Activated CD8-positive, alpha-beta T cell treated with anti-CD3 and anti-CD28 coated beads, Interleukin-2, amount 10 ng/mL, durations not matched to agents 7 days and 5 days (primary cell): ENCODE measurements at regions of chr2 and their contacts with region 1.

Region 1: GRCh38 chr2:62475172-62476011 is 30.6 kb downstream of the TMEM17 start:
- DNase-seq: no peak
- ATAC-seq: peak; percentile 39
- H3K4me3 Mint-ChIP-seq: no peak overlapping the region
- H3K27ac Mint-ChIP-seq: no peak overlapping the region
- H3K4me1 Mint-ChIP-seq: peaks cover 8% of the 10 kb centered on the region
- H3K27me3 Mint-ChIP-seq: peaks cover 9% of the 10 kb centered on the region

Region 2: GRCh38 chr2:62277688-62278087 is 197.7 kb before region 1 on chr2:
- CTCF ChIA-PET with region 1: no interaction called
- POLR2A ChIA-PET with region 1: no interaction called
- DNase-seq: no peak
- ATAC-seq: no peak
- H3K4me3 Mint-ChIP-seq: no peak overlapping the region
- H3K27ac Mint-ChIP-seq: no peak overlapping the region
- H3K4me1 Mint-ChIP-seq: no peaks in the 10 kb centered on the region
- H3K27me3 Mint-ChIP-seq: no peaks in the 10 kb centered on the region

Region 3: DNA sequence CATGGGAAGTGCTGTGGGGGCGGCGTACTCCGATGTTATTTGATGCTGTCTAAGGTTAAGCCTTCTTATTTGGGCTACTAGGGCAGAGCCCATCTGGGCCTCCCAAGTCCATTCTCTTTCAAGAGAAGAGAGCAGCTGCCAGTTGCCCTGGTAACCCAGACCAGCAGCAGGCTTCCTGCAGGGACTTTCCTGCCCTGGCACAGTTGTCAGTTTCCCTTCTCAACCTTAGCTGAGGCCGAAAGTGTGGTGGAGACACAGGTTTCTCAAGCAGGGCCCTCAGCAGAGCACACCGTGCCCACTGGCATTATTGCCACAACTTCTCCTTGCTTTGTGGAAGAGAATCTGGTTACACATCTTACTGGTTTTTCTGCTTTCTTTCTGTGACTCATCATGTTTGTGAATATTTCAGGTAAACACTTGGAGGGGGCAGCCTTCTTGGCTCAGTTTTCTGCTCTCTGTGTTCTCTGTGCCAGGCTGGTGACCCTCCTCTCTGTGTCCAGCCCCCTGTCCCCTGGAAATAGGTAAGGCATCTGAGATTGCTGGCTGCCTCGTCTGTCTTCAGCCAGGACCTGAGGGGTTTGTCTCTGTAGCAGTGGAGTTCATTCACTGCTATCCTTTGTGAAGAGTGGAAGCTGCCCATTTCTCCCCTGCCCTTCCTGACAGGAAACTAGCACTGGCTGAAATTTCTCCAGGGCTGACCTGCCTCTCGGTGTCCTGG is 168.5 kb before region 1 on chr2:
- CTCF ChIA-PET with region 1: no interaction called
- POLR2A ChIA-PET with region 1: no interaction called
- DNase-seq: peak; percentile 53
- ATAC-seq: peak; percentile 37
- H3K4me3 Mint-ChIP-seq: peak overlapping the region; percentile 7
- H3K27ac Mint-ChIP-seq: peak overlapping the region; percentile 85
- H3K4me1 Mint-ChIP-seq: peaks cover 94% of the 10 kb centered on the region
- H3K27me3 Mint-ChIP-seq: no peaks in the 10 kb centered on the region

Region 4: GRCh38 chr2:62456721-62457539 is 18.5 kb before region 1 on chr2:
- CTCF ChIA-PET with region 1: interaction called, 44 read pairs
- POLR2A ChIA-PET with region 1: no interaction called
- DNase-seq: peak; percentile 61
- ATAC-seq: peak; percentile 95
- H3K4me3 Mint-ChIP-seq: peak overlapping the region; percentile 52
- H3K27ac Mint-ChIP-seq: no peak overlapping the region
- H3K4me1 Mint-ChIP-seq: peaks cover 2% of the 10 kb centered on the region
- H3K27me3 Mint-ChIP-seq: peaks cover 6% of the 10 kb centered on the region

Region 5: DNA sequence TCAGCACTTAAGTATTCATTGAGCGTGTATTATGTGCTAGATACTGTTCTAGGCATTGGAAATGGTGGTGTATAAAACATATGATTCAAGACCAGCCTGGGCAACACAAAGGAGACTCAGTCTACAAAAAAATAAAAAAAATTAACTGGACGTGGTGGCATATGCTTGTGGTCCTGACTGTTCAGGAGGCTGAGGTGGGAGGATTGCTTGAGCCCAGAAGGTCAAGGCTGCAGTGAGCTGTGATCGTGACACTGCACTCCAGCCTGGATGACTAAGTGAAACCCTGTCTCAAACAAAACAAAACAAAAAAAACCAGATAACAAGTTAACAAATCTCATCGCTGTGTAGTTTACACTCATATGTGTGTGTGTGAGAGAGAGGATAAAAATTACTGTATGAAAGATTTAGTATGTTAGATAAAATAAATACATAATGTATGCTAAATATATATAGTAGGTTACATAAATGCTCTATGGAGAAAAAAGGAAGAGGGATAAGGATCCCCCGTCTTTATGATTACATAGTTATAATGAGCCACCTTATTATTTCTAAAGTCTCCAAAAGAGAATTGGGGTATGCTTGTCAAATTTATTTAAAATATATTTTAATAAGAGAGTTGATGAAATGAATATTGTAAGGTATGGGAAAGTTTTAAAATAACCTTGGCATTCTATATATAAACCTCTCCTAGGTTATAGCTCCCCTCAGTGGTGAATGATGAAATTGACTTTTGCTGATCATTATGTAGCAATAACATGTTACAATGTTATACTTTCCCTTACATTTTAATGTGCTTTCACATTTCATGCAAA is 299.4 kb after region 1 on chr2:
- CTCF ChIA-PET with region 1: interaction called, 13 read pairs
- POLR2A ChIA-PET with region 1: no interaction called
- DNase-seq: no peak
- ATAC-seq: peak; percentile 51
- H3K4me3 Mint-ChIP-seq: no peak overlapping the region
- H3K27ac Mint-ChIP-seq: no peak overlapping the region
- H3K4me1 Mint-ChIP-seq: no peaks in the 10 kb centered on the region
- H3K27me3 Mint-ChIP-seq: no peaks in the 10 kb centered on the region